Transverse colon (tissue), 4 donors: ENCODE measurements at regions of chr6 and their contacts with region 1.

Region 1: DNA sequence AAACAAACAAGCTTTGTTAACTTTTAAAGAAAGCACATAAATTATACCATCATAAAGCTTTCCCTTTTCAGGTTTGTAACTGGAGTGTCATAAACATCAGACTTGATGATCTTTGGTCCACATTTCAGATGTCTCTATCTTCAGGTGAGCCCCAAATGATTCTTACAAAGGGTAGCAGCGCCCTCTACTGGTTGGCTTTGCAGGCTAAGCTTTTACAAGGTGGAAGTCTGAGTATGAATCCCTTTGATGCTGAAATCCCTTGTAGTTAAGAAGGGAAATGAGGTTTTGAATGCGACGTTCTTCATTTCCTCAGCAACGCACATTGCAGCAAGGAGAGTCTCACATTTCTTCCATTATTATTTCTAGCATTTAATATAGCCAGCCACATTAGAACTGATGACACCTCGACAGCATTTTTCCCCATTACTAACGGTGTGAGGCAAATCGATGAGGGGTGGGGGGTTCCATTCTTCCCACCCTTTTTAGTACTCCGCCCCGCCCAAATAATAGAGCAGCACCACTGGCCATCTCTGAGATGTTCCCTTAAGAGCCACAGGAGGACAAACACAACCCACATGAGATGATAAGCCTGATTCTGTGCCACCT is 126.3 kb upstream of the NT5E start:
- DNase-seq: peak; percentile 80
- H3K4me3 ChIP-seq: no peak overlapping the region
- H3K27ac ChIP-seq: no peak overlapping the region
- H3K4me1 ChIP-seq: no peaks in the 10 kb centered on the region
- H3K27me3 ChIP-seq: peaks cover 5% of the 10 kb centered on the region
- CTCF ChIP-seq: peak; percentile 67 to 80 (median 69)
- EP300 ChIP-seq: no peak
- POLR2A ChIP-seq: no peak

Region 2: GRCh38 chr6:84422380-84422968 is 901.1 kb before region 1 on chr6:
- in situ Hi-C with region 1: loop called in 2 of 4 experiments (anchors 10 to 25 kb)
- intact Hi-C with region 1: no loop called
- DNase-seq: peak; percentile 21
- H3K4me3 ChIP-seq: no peak overlapping the region
- H3K27ac ChIP-seq: no peak overlapping the region
- H3K4me1 ChIP-seq: no peaks in the 10 kb centered on the region
- H3K27me3 ChIP-seq: peaks cover 17% of the 10 kb centered on the region
- CTCF ChIP-seq: peak in 4 of 5 experiments; percentile 10 to 42 (median 27)
- EP300 ChIP-seq: no peak
- POLR2A ChIP-seq: no peak